Naive thymus-derived CD4-positive, alpha-beta T cell (primary cell): ENCODE measurements at regions of chr12 and their contacts with region 1.

Region 1: DNA sequence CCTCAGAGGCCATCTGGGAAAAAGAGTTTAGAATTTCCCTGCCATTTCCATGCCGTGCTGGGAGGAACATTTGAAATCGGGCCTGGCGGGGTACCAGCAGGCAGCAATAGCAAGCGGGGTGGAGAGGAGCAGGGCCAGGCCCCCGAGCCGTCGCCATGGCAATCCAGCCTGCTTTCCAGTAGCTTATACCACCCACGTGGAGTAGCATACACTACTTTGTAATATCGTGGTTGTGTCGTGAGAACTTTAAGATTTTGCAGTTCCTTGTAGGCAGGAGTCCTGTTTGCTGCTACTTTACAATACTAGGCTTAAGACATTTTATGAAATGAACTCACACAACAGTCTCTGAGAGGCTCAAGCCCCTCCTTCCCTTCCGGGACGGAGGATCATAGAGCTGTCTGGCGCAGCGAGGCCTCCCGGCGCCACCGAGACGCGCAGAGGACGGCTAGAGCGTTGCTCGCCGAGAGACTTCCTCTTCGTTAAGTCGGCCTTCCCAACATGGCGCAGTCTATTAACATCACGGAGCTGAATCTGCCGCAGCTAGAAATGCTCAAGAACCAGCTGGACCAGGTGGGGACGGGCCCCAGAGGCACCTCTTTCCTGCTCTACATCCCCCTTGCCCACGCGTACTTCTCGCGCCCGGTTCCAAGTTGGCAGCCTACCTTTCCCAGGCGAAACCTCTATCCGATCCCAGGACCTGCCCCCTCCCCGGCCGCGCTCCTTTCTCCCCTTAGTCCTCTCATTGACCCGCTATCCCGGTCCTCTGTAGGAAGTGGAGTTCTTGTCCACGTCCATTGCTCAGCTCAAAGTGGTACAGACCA is at the start of gene PFDN5:
- DNase-seq: peak; percentile 71 to 94 (median 88)
- ATAC-seq: peak; percentile 95
- H3K4me3 ChIP-seq: peak within 1 kb of the TSS; percentile 85
- H3K4me3 Mint-ChIP-seq: peak within 1 kb of the TSS; percentile 91 to 100 (median 98)
- H3K27ac ChIP-seq: peak within 1 kb of the TSS; percentile 94
- H3K27ac Mint-ChIP-seq: peak within 1 kb of the TSS; percentile 96 to 99 (median 98)
- H3K4me1 ChIP-seq: peaks cover 24 to 28% of the 10 kb centered on the region in 2 donors
- H3K4me1 Mint-ChIP-seq: peaks cover 27 to 62% (median 37%) of the 10 kb centered on the region in 7 donors
- H3K27me3 ChIP-seq: no peaks in the 10 kb centered on the region
- H3K27me3 Mint-ChIP-seq: no peaks in the 10 kb centered on the region
- total RNA-seq, gene PFDN5: 323 to 785 (median 692) TPM

Region 2: DNA sequence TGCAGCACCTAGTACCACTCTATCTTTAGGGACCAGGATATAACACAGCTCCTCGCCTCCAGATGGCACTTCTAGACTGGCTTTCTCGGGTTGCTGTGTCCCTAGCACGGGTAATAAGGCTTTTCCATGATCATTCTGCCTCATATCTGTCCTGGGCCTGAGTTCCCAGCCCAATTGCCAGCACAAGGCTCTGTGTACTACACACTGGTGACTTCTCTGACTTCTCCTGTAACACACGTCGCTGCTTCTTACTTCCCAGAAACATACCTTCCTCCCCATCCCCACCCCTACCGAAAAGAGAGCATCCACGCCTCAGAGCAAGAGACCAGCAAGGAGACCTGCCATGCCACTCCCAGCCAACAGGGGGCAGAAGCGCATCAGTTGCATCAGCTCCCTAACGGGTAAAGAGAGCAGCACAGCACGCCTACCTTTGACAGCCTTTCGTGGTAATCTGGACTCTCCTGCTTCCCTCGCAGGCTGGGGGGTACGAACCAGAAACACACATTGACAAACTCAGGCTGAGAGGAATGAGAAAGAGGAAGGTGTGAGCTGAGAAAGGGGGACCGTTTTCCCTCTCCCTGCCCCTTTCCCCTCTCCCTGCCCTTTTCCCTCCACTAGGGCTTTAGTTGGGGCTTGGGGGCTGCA is 136.0 kb before region 1 on chr12:
- CTCF ChIA-PET with region 1: interaction called, 10 read pairs
- POLR2A ChIA-PET with region 1: interaction called, 3 read pairs
- intact Hi-C with region 1: no loop called
- DNase-seq: peak; percentile 72 to 91 (median 85)
- ATAC-seq: peak; percentile 100
- H3K4me3 ChIP-seq: no peak overlapping the region
- H3K4me3 Mint-ChIP-seq: peak overlapping the region in 1 of 10 donors; percentile 24
- H3K27ac ChIP-seq: no peak overlapping the region
- H3K27ac Mint-ChIP-seq: peak overlapping the region in 6 of 9 donors; percentile 26 to 66 (median 52)
- H3K4me1 ChIP-seq: peaks cover 5 to 7% of the 10 kb centered on the region in 2 donors
- H3K4me1 Mint-ChIP-seq: peaks cover 4 to 12% (median 7%) of the 10 kb centered on the region in 7 donors
- H3K27me3 ChIP-seq: no peaks in the 10 kb centered on the region
- H3K27me3 Mint-ChIP-seq: no peaks in the 10 kb centered on the region

Region 3: DNA sequence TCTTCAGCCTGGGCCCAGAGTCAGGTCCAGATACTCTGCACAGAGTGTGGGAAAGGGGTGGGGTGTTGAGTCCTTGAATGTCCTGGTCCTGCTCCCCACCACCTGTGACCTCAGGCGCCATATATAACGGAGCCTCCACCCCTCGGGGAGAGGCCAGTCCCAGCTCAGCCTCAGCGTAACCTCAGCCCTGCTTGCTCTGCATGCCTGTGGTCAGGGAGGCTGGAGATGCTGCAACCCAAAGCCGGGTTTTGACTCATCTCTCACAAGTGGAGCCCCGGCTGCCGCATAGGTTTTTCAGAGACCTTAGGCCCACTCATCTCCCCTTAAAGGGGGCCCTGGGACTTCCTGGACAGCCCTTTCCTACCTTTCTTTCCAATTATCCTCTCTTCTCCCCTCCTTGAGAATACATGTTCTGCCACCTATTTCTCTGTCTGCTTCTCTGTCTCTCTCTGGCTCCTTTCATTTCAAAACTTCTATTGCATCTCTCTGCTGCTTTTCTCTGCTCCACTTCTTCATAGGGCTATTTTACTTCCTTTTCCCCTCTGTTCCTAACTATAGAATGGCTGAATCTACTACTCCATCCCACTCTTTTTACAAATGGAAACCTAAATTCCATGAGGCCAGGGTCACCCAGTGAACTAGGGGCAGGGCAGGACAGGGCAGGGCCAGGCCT is 89.4 kb before region 1 on chr12:
- CTCF ChIA-PET with region 1: interaction called, 159 read pairs
- POLR2A ChIA-PET with region 1: interaction called, 23 read pairs
- intact Hi-C with region 1: no loop called
- DNase-seq: peak in 1 of 9 donors; percentile 75
- ATAC-seq: peak; percentile 68
- H3K4me3 ChIP-seq: peak overlapping the region; percentile 84
- H3K4me3 Mint-ChIP-seq: peak overlapping the region; percentile 83 to 92 (median 86)
- H3K27ac ChIP-seq: peak overlapping the region; percentile 85
- H3K27ac Mint-ChIP-seq: peak overlapping the region; percentile 61 to 90 (median 87)
- H3K4me1 ChIP-seq: peaks cover 63 to 73% of the 10 kb centered on the region in 2 donors
- H3K4me1 Mint-ChIP-seq: peaks cover 53 to 84% (median 71%) of the 10 kb centered on the region in 7 donors
- H3K27me3 ChIP-seq: no peaks in the 10 kb centered on the region
- H3K27me3 Mint-ChIP-seq: no peaks in the 10 kb centered on the region

Region 4: GRCh38 chr12:53267999-53268647 is 27.2 kb before region 1 on chr12 and contains the start of gene ESPL1:
- CTCF ChIA-PET with region 1: interaction called, 3 read pairs
- POLR2A ChIA-PET with region 1: interaction called, 10 read pairs
- intact Hi-C with region 1: loop called (anchors 1 kb)
- DNase-seq: peak; percentile 67 to 91 (median 81)
- ATAC-seq: peak; percentile 93
- H3K4me3 ChIP-seq: peak within 1 kb of the TSS; percentile 80
- H3K4me3 Mint-ChIP-seq: peak within 1 kb of the TSS; percentile 95 to 99 (median 96)
- H3K27ac ChIP-seq: peak within 1 kb of the TSS; percentile 83
- H3K27ac Mint-ChIP-seq: peak within 1 kb of the TSS; percentile 44 to 98 (median 88)
- H3K4me1 ChIP-seq: peaks cover 9 to 11% of the 10 kb centered on the region in 2 donors
- H3K4me1 Mint-ChIP-seq: peaks cover 10 to 54% (median 20%) of the 10 kb centered on the region in 7 donors
- H3K27me3 ChIP-seq: no peaks in the 10 kb centered on the region
- H3K27me3 Mint-ChIP-seq: no peaks in the 10 kb centered on the region
- total RNA-seq, gene ESPL1: 0.08 to 65.4 (median 1.1) TPM

Region 5: GRCh38 chr12:53441040-53441833 is 146.0 kb after region 1 on chr12 and contains the start of gene PRR13:
- CTCF ChIA-PET with region 1: no interaction called
- POLR2A ChIA-PET with region 1: interaction called, 6 read pairs
- intact Hi-C with region 1: loop called in 1 of 2 experiments (anchors 1 kb)
- DNase-seq: peak; percentile 90 to 99 (median 96)
- ATAC-seq: peak; percentile 99
- H3K4me3 ChIP-seq: peak within 1 kb of the TSS; percentile 93
- H3K4me3 Mint-ChIP-seq: peak within 1 kb of the TSS; percentile 89 to 99 (median 96)
- H3K27ac ChIP-seq: peak within 1 kb of the TSS; percentile 92
- H3K27ac Mint-ChIP-seq: peak within 1 kb of the TSS; percentile 91 to 97 (median 97)
- H3K4me1 ChIP-seq: peaks cover 18 to 24% of the 10 kb centered on the region in 2 donors
- H3K4me1 Mint-ChIP-seq: peaks cover 30 to 52% (median 43%) of the 10 kb centered on the region in 7 donors
- H3K27me3 ChIP-seq: no peaks in the 10 kb centered on the region
- H3K27me3 Mint-ChIP-seq: no peaks in the 10 kb centered on the region
- total RNA-seq, gene PRR13: 147 to 215 (median 201) TPM

Region 6: DNA sequence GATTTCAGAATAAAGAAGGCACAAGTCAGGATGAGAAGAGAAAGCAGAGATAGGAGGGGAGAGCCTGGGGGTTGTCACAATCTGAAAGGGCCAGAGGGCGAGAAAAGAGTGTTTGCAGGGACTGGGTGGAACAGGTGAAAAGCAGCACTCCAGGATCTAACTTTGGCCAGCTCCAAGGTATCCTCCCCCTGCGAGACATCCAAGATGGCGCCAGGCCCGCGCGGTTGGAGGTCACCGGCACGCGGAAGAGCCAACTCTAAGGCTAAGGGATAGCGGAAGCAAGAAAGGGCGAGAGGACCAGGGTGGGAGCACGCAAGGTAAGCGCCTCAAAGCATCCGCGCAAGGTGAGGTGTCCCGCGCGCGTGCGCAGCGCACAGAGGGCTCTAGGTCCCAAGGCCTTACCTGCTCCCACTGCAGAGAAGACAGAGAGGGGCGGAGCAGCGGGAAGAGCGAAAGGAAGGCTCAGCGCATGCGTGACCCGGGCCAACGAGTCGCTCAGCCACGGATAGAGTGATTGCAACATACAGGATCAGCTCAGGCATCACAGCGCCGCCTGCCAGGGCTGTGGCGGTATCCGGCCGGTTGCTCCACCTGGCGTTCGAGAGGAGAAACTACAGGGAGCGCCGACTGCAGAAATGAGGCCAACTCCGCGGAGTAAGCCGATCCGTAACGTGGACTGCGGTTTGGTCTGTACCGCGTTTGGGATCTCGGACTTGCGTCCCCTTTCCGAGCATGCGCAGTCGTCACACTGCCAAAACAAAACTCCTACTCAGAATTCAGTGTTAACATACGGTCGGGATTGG is 380.6 kb after region 1 on chr12 and contains the start of gene ATP5MC2:
- CTCF ChIA-PET with region 1: interaction called, 3 read pairs
- POLR2A ChIA-PET with region 1: no interaction called
- intact Hi-C with region 1: loop called (anchors 2 to 5 kb)
- DNase-seq: peak; percentile 92 to 98 (median 97)
- ATAC-seq: peak; percentile 97
- H3K4me3 ChIP-seq: peak within 1 kb of the TSS; percentile 64
- H3K4me3 Mint-ChIP-seq: peak within 1 kb of the TSS; percentile 91 to 99 (median 94)
- H3K27ac ChIP-seq: peak within 1 kb of the TSS; percentile 76
- H3K27ac Mint-ChIP-seq: peak within 1 kb of the TSS; percentile 91 to 98 (median 95)
- H3K4me1 ChIP-seq: peaks cover 7 to 21% of the 10 kb centered on the region in 2 donors
- H3K4me1 Mint-ChIP-seq: peaks cover 21 to 38% (median 32%) of the 10 kb centered on the region in 7 donors
- H3K27me3 ChIP-seq: no peaks in the 10 kb centered on the region
- H3K27me3 Mint-ChIP-seq: peaks cover 16 to 35% (median 21%) of the 10 kb centered on the region in 5 donors
- total RNA-seq, gene ATP5MC2: 237 to 332 (median 275) TPM